ENCODE measurements at regions of chr11 and their contacts with region 1.

Region 1: DNA sequence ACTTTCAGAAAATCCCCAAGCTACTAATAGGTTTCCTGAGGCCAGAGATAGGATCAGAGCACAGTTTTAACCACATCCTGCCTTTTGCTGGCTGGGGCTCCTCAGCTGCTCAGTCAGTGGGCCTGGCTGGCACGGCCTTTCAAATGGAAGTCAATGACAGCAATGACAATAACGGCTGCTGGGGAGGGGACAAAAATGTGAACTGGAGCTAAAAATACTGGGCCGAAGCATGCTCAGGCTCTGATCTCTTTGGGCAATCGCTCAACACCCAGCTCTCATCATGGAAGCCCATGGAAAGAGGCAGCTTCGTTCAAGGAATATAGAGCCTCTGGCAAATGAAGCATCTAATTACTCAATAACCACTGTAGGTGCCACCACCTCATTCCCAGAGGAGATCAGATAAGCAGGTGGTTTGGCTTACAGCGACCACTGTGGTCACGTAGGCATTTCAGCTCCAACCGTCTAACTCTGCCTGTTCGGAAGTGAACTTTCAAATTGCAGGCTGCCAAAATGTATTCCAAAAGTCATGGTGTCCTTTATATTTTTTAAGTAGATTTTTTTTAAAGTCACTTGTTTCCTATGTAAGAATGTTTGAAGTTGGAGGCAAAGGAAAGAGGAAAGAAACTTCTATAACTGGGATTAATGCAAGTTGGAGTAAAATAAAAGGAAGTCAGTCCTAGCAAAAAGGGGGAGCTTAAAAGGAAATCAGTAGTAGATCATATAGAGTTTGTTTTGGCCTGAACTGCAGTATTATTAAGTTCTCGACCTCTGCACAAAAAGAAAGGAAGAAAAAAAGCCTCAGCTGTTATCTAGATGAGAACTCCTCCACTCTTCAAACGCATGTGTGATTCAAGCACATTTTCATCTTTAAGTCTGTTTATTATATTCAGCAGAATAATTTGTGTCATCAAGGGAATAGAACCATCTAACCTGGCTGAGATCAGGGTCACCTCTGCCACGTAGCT is 14.1 kb downstream of the WT1 start:
- DNase-seq: peak; percentile 63
- H3K4me3 Mint-ChIP-seq: peak overlapping the region; percentile 54
- H3K27ac Mint-ChIP-seq: peak overlapping the region; percentile 54
- H3K4me1 Mint-ChIP-seq: peaks cover 37% of the 10 kb centered on the region
- H3K27me3 Mint-ChIP-seq: peaks cover 59% of the 10 kb centered on the region

Region 2: DNA sequence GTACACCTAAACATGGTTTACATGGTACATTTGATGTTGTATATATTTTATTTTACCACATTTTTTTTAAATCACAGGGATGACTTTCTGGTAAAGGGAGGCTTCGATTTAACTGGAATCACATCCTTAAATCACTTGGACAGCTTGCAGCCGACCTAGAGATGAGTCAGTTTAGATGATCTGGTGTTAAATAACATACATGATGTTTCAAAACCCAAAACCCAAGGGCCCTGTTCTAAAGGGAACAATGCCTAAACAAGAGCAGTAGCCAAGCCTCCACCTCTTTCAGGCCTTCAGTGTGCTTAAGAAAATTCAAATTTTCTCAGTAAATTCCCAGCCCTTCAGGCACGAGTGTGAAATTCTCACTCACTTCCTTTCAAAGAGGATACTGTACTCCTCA is 94.7 kb before region 1 on chr11:
- intact Hi-C with region 1: loop called (anchors 5 kb)
- DNase-seq: no peak
- H3K4me3 Mint-ChIP-seq: no peak overlapping the region
- H3K27ac Mint-ChIP-seq: no peak overlapping the region
- H3K4me1 Mint-ChIP-seq: no peaks in the 10 kb centered on the region
- H3K27me3 Mint-ChIP-seq: peaks cover 20% of the 10 kb centered on the region

Region 3: GRCh38 chr11:32379719-32380118 is 41.5 kb before region 1 on chr11:
- intact Hi-C with region 1: loop called (anchors 5 kb)
- DNase-seq: no peak
- H3K4me3 Mint-ChIP-seq: no peak overlapping the region
- H3K27ac Mint-ChIP-seq: no peak overlapping the region
- H3K4me1 Mint-ChIP-seq: no peaks in the 10 kb centered on the region
- H3K27me3 Mint-ChIP-seq: peaks cover 6% of the 10 kb centered on the region